Transverse colon (tissue), 4 donors: ENCODE measurements at regions of chr12 and their contacts with region 1.

Region 1: GRCh38 chr12:71840231-71840847 is 780 bp downstream of the TBC1D15 start:
- DNase-seq: no peak
- H3K4me3 ChIP-seq: peak overlapping the region; percentile 58 to 76 (median 64)
- H3K27ac ChIP-seq: peak overlapping the region; percentile 88 to 95 (median 92)
- H3K4me1 ChIP-seq: peaks cover 10 to 43% (median 16%) of the 10 kb centered on the region in 4 donors
- H3K27me3 ChIP-seq: no peaks in the 10 kb centered on the region
- CTCF ChIP-seq: no peak
- EP300 ChIP-seq: no peak
- POLR2A ChIP-seq: no peak

Region 2: GRCh38 chr12:71354871-71355270 is 485.5 kb before region 1 on chr12:
- in situ Hi-C with region 1: no loop called
- intact Hi-C with region 1: no loop called
- DNase-seq: no peak
- H3K4me3 ChIP-seq: no peak overlapping the region
- H3K27ac ChIP-seq: no peak overlapping the region
- H3K4me1 ChIP-seq: no peaks in the 10 kb centered on the region
- H3K27me3 ChIP-seq: no peaks in the 10 kb centered on the region
- CTCF ChIP-seq: no peak
- EP300 ChIP-seq: no peak
- POLR2A ChIP-seq: no peak

Region 3: DNA sequence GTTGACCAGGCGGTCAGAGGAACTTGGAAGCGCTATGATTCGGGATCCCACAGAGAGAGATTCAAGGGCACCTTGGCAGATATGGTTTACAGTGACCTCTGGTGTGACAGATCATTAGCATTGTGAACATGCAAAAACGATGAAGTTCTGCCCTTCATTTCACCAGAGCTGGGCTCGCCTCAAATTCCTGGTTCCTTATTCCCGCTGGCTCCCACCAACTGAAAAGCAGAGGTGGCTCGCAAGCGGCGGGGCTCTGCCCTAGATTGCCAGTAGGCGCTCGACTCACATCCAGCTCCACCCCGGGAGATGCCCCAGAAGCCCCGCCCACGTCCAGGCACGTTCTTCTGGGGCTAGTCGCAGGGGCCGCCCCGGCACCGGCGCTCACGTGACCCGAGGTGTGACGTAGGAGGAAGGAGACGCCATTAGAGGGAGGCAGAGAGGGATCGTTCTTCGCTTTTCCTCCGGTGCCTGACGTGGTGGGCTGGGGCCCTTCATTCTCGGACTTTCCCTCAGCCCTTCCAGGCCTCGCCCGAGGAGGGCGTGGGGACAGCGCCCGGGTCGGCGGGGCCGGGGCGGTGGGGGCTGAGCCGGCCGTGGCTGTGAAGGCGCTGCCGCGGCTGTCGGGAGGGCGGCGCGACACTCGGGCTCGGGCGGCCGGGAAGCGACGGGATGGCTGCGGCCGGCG is 85.7 kb before region 1 on chr12 and contains the start of gene RAB21:
- in situ Hi-C with region 1: loop called in 1 of 4 experiments (anchors 10 kb)
- intact Hi-C with region 1: no loop called
- DNase-seq: peak; percentile 99
- H3K4me3 ChIP-seq: peak within 1 kb of the TSS; percentile 72 to 92 (median 82)
- H3K27ac ChIP-seq: peak within 1 kb of the TSS; percentile 95 to 98 (median 97)
- H3K4me1 ChIP-seq: peaks cover 6 to 28% (median 17%) of the 10 kb centered on the region in 4 donors
- H3K27me3 ChIP-seq: no peaks in the 10 kb centered on the region
- CTCF ChIP-seq: peak; percentile 26 to 69 (median 40)
- EP300 ChIP-seq: no peak
- POLR2A ChIP-seq: peak; percentile 90
- total RNA-seq, gene RAB21: 15.9 to 48.4 (median 29.9) TPM

Region 4: DNA sequence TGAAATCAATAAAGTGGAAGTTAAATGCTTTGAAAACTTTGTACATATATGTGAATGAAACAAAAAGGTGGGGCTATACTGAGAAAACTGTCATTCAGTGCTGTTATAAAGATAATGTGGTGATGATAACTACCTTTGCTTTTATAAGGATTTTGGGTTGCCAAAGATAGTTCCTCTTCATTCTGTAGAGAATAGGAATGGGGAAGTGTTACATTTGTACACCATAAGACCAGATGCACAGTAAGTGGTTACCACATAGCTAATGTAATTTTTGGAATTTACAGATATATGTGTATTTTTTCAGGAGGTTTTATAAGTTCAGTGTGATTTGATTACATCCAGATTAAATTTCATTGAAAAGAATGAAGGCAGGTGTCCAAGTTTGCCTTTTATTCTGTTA is 67.6 kb before region 1 on chr12:
- in situ Hi-C with region 1: loop called in 1 of 4 experiments (anchors 10 kb)
- intact Hi-C with region 1: no loop called
- DNase-seq: no peak
- H3K4me3 ChIP-seq: no peak overlapping the region
- H3K27ac ChIP-seq: no peak overlapping the region
- H3K4me1 ChIP-seq: peaks cover 0 to 22% (median 7%) of the 10 kb centered on the region in 4 donors
- H3K27me3 ChIP-seq: no peaks in the 10 kb centered on the region
- CTCF ChIP-seq: no peak
- EP300 ChIP-seq: no peak
- POLR2A ChIP-seq: no peak

Region 5: GRCh38 chr12:71938728-71939385 is 98.5 kb after region 1 on chr12 and contains the start of gene TPH2:
- in situ Hi-C with region 1: loop called in 1 of 4 experiments (anchors 25 kb)
- intact Hi-C with region 1: no loop called
- DNase-seq: peak; percentile 9
- H3K4me3 ChIP-seq: no peak within 1 kb of the TSS
- H3K27ac ChIP-seq: no peak within 1 kb of the TSS
- H3K4me1 ChIP-seq: no peaks in the 10 kb centered on the region
- H3K27me3 ChIP-seq: peaks cover 57% of the 10 kb centered on the region
- CTCF ChIP-seq: peak in 4 of 5 experiments; percentile 12 to 28 (median 22)
- EP300 ChIP-seq: no peak
- POLR2A ChIP-seq: no peak
- total RNA-seq, gene TPH2: not detected

Region 6: DNA sequence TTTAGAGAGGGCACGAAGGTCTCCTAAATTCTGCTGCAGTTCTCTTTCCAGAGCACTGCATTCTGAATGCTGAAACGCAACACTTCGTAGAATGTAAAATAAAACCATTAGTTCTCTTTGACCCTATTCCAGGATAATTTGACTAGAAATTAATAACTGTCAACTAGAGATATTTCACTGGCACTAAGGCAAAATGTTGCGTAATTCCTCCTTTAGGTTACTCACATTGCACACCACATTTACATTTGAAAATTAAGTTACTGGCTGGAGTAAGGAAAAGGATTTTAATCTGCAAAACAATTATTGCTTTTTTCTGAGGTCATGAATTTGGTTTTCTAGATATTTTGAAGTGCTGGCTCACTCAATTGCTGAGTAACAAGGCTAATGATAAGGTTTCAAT is 373.8 kb after region 1 on chr12:
- in situ Hi-C with region 1: no loop called
- intact Hi-C with region 1: no loop called
- DNase-seq: no peak
- H3K4me3 ChIP-seq: no peak overlapping the region
- H3K27ac ChIP-seq: no peak overlapping the region
- H3K4me1 ChIP-seq: no peaks in the 10 kb centered on the region
- H3K27me3 ChIP-seq: no peaks in the 10 kb centered on the region
- CTCF ChIP-seq: no peak
- EP300 ChIP-seq: no peak
- POLR2A ChIP-seq: no peak